Activated CD4-positive, alpha-beta memory T cell treated with anti-CD3 and anti-CD28 coated beads, Interleukin-2, amount 10 ng/mL, durations not matched to agents 7 days and 5 days (primary cell): ENCODE measurements at regions of chr7 and their contacts with region 1.

Region 1: DNA sequence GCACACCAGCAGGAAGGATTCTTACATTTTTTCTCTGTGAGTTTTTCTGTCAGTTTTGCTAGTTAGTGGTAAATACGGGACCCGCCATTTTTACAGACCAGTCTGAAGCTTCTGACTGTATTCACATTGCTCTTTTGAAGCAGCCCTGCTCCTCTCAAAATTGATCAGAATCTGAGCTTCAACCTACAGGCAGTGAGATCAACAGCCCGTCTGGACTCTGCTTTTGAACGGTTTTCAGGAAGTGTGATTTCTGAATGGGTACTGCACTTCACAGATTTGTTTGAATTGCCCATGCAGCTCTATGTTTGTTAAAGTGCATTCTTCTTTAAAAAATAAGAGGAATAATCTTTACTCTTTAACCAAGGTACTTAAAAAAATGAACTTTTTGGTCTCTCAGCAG is 8.9 kb downstream of the PURB start:
- DNase-seq: no peak
- H3K4me3 Mint-ChIP-seq: no peak overlapping the region
- H3K27ac Mint-ChIP-seq: no peak overlapping the region
- H3K4me1 Mint-ChIP-seq: peaks cover 22% of the 10 kb centered on the region
- H3K27me3 Mint-ChIP-seq: no peaks in the 10 kb centered on the region

Region 2: GRCh38 chr7:44858161-44858560 is 18.2 kb before region 1 on chr7:
- CTCF ChIA-PET with region 1: interaction called, 56 read pairs
- POLR2A ChIA-PET with region 1: interaction called, 34 read pairs
- DNase-seq: no peak
- H3K4me3 Mint-ChIP-seq: no peak overlapping the region
- H3K27ac Mint-ChIP-seq: no peak overlapping the region
- H3K4me1 Mint-ChIP-seq: peaks cover 19% of the 10 kb centered on the region
- H3K27me3 Mint-ChIP-seq: peaks cover 5% of the 10 kb centered on the region